ENCODE measurements at regions of chr17 and their contacts with region 1.

Region 1: DNA sequence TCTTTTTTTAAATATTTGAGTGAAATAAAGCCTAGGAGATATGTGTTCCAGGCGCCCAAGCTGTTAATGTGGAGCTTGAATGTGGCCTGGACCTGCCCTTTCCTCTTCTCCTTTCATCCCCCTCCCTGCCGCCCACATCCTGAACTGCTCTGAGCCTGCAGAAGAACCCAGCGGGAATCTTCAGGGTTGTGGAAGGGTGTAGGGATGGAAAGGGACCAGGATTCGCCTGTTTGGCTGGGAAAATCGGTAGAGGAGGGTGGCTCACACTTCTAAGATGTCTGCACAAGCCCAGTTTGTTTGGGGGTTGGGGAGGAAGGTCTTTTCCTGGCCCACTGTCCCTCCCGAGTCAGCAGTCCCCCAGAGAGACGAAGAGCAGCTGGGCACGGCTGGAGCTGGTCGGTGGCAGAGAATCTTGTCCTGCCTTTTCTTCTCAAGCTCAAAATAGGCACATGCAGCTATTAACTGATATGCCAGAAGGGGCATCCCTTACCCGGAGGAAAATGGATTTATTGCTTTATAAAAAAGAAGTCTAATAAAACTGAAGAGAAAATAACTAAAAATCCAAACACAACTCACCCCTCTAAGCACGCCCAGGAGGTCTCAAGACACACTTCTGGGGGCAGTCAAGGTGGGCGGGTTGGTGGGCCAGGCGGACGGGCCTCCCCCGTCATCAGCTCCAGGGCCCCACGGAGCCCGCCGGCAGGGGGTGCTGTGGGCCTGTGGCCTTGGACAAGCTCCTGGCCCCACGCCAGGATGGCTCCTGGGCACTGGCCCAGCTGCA is 11.5 kb upstream of the PITPNA start:
- DNase-seq: peak; percentile 63
- H3K4me3 ChIP-seq: no peak overlapping the region
- H3K27ac ChIP-seq: no peak overlapping the region
- H3K4me1 ChIP-seq: peaks cover 33% of the 10 kb centered on the region
- H3K27me3 ChIP-seq: no peaks in the 10 kb centered on the region
- CTCF ChIP-seq: peak; percentile 82 to 97

Region 2: GRCh38 chr17:1289695-1290094 is 284.4 kb before region 1 on chr17:
- CTCF ChIA-PET with region 1: interaction called, 15 read pairs
- dilution Hi-C with region 1: no loop called
- in situ Hi-C with region 1: no loop called
- intact Hi-C with region 1: no loop called
- DNase-seq: peak; percentile 40
- H3K4me3 ChIP-seq: no peak overlapping the region
- H3K27ac ChIP-seq: no peak overlapping the region
- H3K4me1 ChIP-seq: no peaks in the 10 kb centered on the region
- H3K27me3 ChIP-seq: no peaks in the 10 kb centered on the region
- CTCF ChIP-seq: no peak

Region 3: GRCh38 chr17:1648963-1649843 is 75.1 kb after region 1 on chr17:
- CTCF ChIA-PET with region 1: interaction called, 13 read pairs
- dilution Hi-C with region 1: no loop called
- in situ Hi-C with region 1: no loop called
- intact Hi-C with region 1: no loop called
- DNase-seq: peak; percentile 86
- H3K4me3 ChIP-seq: peak overlapping the region; percentile 34 to 77 (median 63)
- H3K27ac ChIP-seq: peak overlapping the region; percentile 34
- H3K4me1 ChIP-seq: peaks cover 41% of the 10 kb centered on the region
- H3K27me3 ChIP-seq: no peaks in the 10 kb centered on the region
- CTCF ChIP-seq: peak; percentile 72 to 85

Region 4: GRCh38 chr17:2303204-2304188 is 729.4 kb after region 1 on chr17 and contains the starts of genes SMG6 and SRR:
- CTCF ChIA-PET with region 1: interaction called, 10 read pairs
- dilution Hi-C with region 1: no loop called
- in situ Hi-C with region 1: no loop called
- intact Hi-C with region 1: no loop called
- DNase-seq: peak; percentile 92
- H3K4me3 ChIP-seq: peak within 1 kb of the TSS; percentile 92 to 99 (median 96)
- H3K27ac ChIP-seq: peak within 1 kb of the TSS; percentile 85
- H3K4me1 ChIP-seq: peaks cover 16% of the 10 kb centered on the region
- H3K27me3 ChIP-seq: no peaks in the 10 kb centered on the region
- CTCF ChIP-seq: no peak
- total RNA-seq, gene SMG6: 22.8 to 27.7 TPM
- total RNA-seq, gene SRR: 9.8 to 18.5 TPM

Measured in mammary epithelial cell (primary cell).